CD8-positive, alpha-beta T cell (primary cell): ENCODE measurements at regions of chr7 and their contacts with region 1.

Region 1: DNA sequence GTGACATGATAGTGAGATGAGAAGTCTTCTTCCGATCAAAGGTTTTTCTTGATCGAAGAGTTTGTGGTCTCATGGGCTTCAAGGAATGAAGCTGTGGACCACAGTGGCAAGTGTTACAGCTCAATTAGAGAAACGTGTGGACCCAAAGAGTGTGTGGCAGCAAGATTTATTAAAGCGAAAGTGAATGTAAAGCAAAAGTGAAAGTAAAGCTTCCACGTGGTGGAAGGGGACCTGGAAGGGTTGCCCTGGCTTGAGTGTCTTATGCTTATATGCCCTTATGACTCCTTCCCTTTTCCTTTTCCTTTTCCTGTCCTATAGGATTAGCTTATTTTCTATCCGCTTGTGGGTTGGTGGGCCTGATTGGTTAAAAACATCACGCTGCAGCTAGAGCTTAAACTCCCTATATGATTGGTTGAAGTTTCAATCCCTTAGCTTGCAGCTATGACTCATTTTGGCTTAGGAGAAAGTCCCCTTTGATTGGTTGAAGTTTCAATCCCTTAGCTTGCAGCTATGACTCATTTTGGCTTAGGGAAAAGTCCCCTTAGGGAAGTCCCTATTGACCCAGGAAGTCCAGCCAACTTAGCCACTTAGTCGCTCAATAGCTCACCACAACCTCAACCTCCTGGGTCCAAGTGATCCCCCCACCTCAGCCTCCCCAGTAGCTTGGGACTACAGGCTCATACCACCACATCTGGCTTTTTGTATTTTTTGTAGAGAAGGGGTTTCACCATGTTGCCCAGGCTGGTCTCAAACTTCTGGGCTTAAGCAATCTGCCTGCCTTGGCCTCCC is 34.7 kb downstream of the MRPS24 start:
- DNase-seq: peak in 7 of 9 experiments; percentile 10 to 85 (median 38)
- ATAC-seq: peak; percentile 63
- H3K4me3 ChIP-seq: peak overlapping the region; percentile 49 to 53
- H3K4me3 Mint-ChIP-seq: peak overlapping the region; percentile 85
- H3K27ac ChIP-seq: peak overlapping the region; percentile 35 to 71
- H3K27ac Mint-ChIP-seq: peak overlapping the region; percentile 83
- H3K4me1 ChIP-seq: peaks cover 12% of the 10 kb centered on the region
- H3K4me1 Mint-ChIP-seq: peaks cover 18% of the 10 kb centered on the region
- H3K27me3 ChIP-seq: no peaks in the 10 kb centered on the region
- H3K27me3 Mint-ChIP-seq: no peaks in the 10 kb centered on the region
- CTCF ChIP-seq: no peak

Region 2: GRCh38 chr7:41940760-41941343 is 1893.8 kb before region 1 on chr7:
- CTCF ChIA-PET with region 1: interaction called, 24 read pairs
- POLR2A ChIA-PET with region 1: no interaction called
- intact Hi-C with region 1: loop called in 1 of 2 experiments (anchors 1 kb)
- DNase-seq: peak in 8 of 9 experiments; percentile 29 to 69 (median 46)
- ATAC-seq: peak; percentile 75
- H3K4me3 ChIP-seq: no peak overlapping the region
- H3K4me3 Mint-ChIP-seq: no peak overlapping the region
- H3K27ac ChIP-seq: no peak overlapping the region
- H3K27ac Mint-ChIP-seq: no peak overlapping the region
- H3K4me1 ChIP-seq: peaks cover 4% of the 10 kb centered on the region
- H3K4me1 Mint-ChIP-seq: peaks cover 10% of the 10 kb centered on the region
- H3K27me3 ChIP-seq: no peaks in the 10 kb centered on the region
- H3K27me3 Mint-ChIP-seq: peaks cover 23% of the 10 kb centered on the region
- CTCF ChIP-seq: peak; percentile 75

Region 3: DNA sequence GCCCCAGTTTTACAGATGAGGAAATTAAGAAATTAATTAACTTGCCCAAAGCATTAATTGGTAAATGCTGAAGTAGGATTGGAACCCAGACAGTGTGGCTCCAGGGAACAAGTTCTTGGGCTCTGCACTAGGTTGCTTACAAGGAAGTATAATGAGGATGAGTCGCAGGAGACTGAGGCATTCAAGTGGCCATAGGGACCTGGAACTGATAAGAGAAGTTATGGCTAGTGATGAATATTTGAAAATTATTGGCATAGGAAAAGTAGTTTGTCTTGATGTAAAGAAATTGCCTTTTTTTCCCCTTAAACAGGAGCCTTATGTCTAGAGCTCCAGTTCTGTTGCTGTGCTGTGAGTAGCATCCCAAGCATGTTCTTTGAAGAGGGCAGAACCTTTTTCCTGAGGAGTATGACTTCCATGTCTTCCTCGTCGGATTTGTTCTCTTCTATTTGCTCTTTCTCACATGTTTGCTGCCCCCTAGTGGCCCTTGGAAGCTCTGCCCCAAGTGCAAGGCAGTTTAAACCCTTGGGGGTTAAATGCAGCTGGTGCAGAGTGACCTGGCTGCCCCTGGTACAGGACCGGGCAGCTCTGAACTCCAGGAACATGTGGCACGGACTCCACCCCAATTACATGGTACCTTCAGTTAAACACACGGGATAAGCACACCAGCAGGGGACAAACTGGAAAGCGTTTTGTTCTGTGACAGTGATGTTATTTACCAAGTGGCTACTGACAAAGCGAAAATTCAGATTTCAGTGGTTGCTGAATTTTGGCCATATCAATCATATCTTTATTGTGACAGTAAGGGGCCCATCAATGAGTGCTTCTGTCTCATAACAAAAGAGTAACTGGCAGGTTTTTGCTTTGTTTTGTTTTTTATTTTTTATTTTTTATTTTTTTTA is 573.4 kb before region 1 on chr7:
- CTCF ChIA-PET with region 1: no interaction called
- POLR2A ChIA-PET with region 1: no interaction called
- intact Hi-C with region 1: loop called (anchors 1 to 5 kb)
- DNase-seq: peak in 8 of 9 experiments; percentile 35 to 71 (median 57)
- ATAC-seq: no peak
- H3K4me3 ChIP-seq: no peak overlapping the region
- H3K4me3 Mint-ChIP-seq: no peak overlapping the region
- H3K27ac ChIP-seq: no peak overlapping the region
- H3K27ac Mint-ChIP-seq: no peak overlapping the region
- H3K4me1 ChIP-seq: no peaks in the 10 kb centered on the region
- H3K4me1 Mint-ChIP-seq: no peaks in the 10 kb centered on the region
- H3K27me3 ChIP-seq: peaks cover 0 to 2% of the 10 kb centered on the region in 2 experiments
- H3K27me3 Mint-ChIP-seq: peaks cover 26% of the 10 kb centered on the region
- CTCF ChIP-seq: peak; percentile 83

Region 4: DNA sequence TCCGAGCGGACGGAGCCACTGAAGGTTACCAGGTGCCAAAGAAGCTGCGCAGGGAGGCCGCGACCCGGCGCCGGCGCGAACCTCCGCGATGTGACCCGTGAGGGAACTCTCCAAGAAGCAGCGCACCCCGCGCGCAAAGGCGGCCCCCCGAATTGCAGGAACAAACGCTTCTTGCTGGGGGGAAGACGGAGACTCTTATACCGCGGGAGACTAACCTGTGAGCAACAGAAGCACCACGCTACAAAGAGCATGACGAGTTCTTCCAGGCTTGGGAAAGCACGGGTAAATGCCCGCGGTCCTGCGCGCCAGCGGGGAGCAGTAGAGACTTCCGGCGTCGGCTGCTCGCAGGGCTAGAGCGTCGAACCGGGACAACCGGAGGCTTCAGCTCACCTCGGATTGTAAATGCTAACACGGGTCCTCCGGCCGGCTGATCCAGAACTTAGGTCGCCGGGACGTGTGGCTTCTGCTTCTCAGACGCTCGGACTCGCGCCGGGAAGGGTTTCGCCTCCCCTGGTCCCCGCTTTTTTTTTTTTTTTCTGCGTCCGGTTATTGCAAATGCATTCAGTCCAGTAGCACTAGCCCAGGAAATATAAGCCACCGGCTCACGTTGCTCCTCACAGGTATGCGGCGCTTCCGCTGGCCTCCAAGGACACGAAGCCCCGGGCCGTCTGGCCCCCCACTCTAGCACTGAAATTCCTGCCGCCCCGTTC is 105.3 kb before region 1 on chr7 and contains the start of gene COA1:
- CTCF ChIA-PET with region 1: interaction called, 5 read pairs
- POLR2A ChIA-PET with region 1: no interaction called
- intact Hi-C with region 1: loop called (anchors 1 to 2 kb)
- DNase-seq: peak; percentile 61 to 93 (median 81)
- ATAC-seq: peak; percentile 92
- H3K4me3 ChIP-seq: peak within 1 kb of the TSS; percentile 81 to 89
- H3K4me3 Mint-ChIP-seq: peak within 1 kb of the TSS; percentile 93
- H3K27ac ChIP-seq: peak within 1 kb of the TSS; percentile 70 to 74
- H3K27ac Mint-ChIP-seq: peak within 1 kb of the TSS; percentile 90
- H3K4me1 ChIP-seq: peaks cover 31% of the 10 kb centered on the region
- H3K4me1 Mint-ChIP-seq: peaks cover 42% of the 10 kb centered on the region
- H3K27me3 ChIP-seq: no peaks in the 10 kb centered on the region
- H3K27me3 Mint-ChIP-seq: no peaks in the 10 kb centered on the region
- CTCF ChIP-seq: no peak
- total RNA-seq, gene COA1: 95.8 to 96.7 TPM

Region 5: DNA sequence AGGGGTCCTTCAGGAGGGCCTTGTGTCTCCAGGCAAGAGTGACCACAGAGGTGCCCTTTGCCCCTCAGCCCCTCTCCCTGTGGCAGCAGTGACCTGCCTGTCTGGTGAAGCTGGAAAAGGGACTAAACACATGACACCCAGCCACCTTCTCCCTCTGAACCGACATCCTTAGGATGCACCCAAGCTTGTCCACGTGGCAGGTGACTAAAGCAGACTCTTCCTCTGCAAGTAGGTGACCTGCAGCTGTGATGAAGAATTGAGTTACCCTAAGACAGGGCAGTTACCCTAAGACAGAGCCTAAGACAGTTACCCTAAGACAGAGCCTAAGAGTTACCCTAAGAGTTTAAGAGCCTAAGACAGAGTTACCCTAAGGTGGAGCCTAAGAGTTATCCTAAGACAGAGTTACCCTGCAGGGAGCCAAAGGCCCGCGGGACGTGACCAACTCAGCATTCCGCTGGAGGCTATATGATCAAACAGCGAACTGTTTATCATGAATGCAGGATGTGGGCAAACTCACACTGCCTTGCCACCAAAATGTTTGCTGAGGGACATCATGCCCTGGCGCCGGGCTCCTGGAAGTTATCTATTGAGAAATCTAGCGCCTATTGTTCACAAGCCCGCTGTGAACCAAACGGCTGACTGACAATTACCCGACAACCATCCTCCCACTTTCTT is 26.4 kb before region 1 on chr7:
- CTCF ChIA-PET with region 1: no interaction called
- POLR2A ChIA-PET with region 1: no interaction called
- intact Hi-C with region 1: no loop called
- DNase-seq: peak in 6 of 9 experiments; percentile 1 to 63 (median 11)
- ATAC-seq: no peak
- H3K4me3 ChIP-seq: no peak overlapping the region
- H3K4me3 Mint-ChIP-seq: no peak overlapping the region
- H3K27ac ChIP-seq: peak overlapping the region in 1 of 2 experiments; percentile 40
- H3K27ac Mint-ChIP-seq: no peak overlapping the region
- H3K4me1 ChIP-seq: no peaks in the 10 kb centered on the region
- H3K4me1 Mint-ChIP-seq: peaks cover 2% of the 10 kb centered on the region
- H3K27me3 ChIP-seq: no peaks in the 10 kb centered on the region
- H3K27me3 Mint-ChIP-seq: peaks cover 13% of the 10 kb centered on the region
- CTCF ChIP-seq: no peak

Region 6: GRCh38 chr7:43856996-43857395 is 22.3 kb after region 1 on chr7:
- CTCF ChIA-PET with region 1: interaction called, 16 read pairs
- POLR2A ChIA-PET with region 1: no interaction called
- intact Hi-C with region 1: no loop called
- DNase-seq: no peak
- ATAC-seq: no peak
- H3K4me3 ChIP-seq: no peak overlapping the region
- H3K4me3 Mint-ChIP-seq: no peak overlapping the region
- H3K27ac ChIP-seq: no peak overlapping the region
- H3K27ac Mint-ChIP-seq: no peak overlapping the region
- H3K4me1 ChIP-seq: no peaks in the 10 kb centered on the region
- H3K4me1 Mint-ChIP-seq: no peaks in the 10 kb centered on the region
- H3K27me3 ChIP-seq: no peaks in the 10 kb centered on the region
- H3K27me3 Mint-ChIP-seq: peaks cover 4% of the 10 kb centered on the region
- CTCF ChIP-seq: no peak

Region 7: DNA sequence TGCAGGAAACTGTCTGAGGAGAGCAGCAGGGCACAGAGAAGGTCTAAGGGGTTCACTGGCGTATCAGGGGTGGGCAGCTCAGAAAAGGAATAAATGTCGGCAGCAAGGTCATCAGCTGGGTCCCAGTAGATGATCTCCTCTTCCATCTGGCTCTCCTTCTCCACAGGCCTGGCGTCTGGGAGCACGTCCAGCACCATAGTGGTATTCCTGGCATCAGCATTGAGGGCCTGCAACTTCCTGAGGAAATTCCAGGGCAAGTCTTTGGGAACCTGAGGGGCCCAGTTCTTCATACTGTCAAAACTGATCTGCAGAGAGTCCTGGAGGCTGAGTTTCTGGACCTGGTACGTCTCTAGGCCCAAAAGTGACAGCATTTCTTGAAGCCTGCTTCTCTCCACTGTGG is 44.2 kb after region 1 on chr7:
- CTCF ChIA-PET with region 1: no interaction called
- POLR2A ChIA-PET with region 1: no interaction called
- intact Hi-C with region 1: no loop called
- DNase-seq: no peak
- ATAC-seq: no peak
- H3K4me3 ChIP-seq: no peak overlapping the region
- H3K4me3 Mint-ChIP-seq: no peak overlapping the region
- H3K27ac ChIP-seq: no peak overlapping the region
- H3K27ac Mint-ChIP-seq: no peak overlapping the region
- H3K4me1 ChIP-seq: no peaks in the 10 kb centered on the region
- H3K4me1 Mint-ChIP-seq: no peaks in the 10 kb centered on the region
- H3K27me3 ChIP-seq: no peaks in the 10 kb centered on the region
- H3K27me3 Mint-ChIP-seq: no peaks in the 10 kb centered on the region
- CTCF ChIP-seq: no peak

Region 8: GRCh38 chr7:44398511-44398911 is 563.9 kb after region 1 on chr7:
- CTCF ChIA-PET with region 1: no interaction called
- POLR2A ChIA-PET with region 1: no interaction called
- intact Hi-C with region 1: no loop called
- DNase-seq: no peak
- ATAC-seq: no peak
- H3K4me3 ChIP-seq: no peak overlapping the region
- H3K4me3 Mint-ChIP-seq: no peak overlapping the region
- H3K27ac ChIP-seq: no peak overlapping the region
- H3K27ac Mint-ChIP-seq: no peak overlapping the region
- H3K4me1 ChIP-seq: no peaks in the 10 kb centered on the region
- H3K4me1 Mint-ChIP-seq: peaks cover 2% of the 10 kb centered on the region
- H3K27me3 ChIP-seq: no peaks in the 10 kb centered on the region
- H3K27me3 Mint-ChIP-seq: no peaks in the 10 kb centered on the region
- CTCF ChIP-seq: no peak

Region 9: GRCh38 chr7:44473295-44473694 is 638.6 kb after region 1 on chr7:
- CTCF ChIA-PET with region 1: no interaction called
- POLR2A ChIA-PET with region 1: no interaction called
- intact Hi-C with region 1: no loop called
- DNase-seq: no peak
- ATAC-seq: no peak
- H3K4me3 ChIP-seq: no peak overlapping the region
- H3K4me3 Mint-ChIP-seq: no peak overlapping the region
- H3K27ac ChIP-seq: no peak overlapping the region
- H3K27ac Mint-ChIP-seq: no peak overlapping the region
- H3K4me1 ChIP-seq: no peaks in the 10 kb centered on the region
- H3K4me1 Mint-ChIP-seq: peaks cover 68% of the 10 kb centered on the region
- H3K27me3 ChIP-seq: no peaks in the 10 kb centered on the region
- H3K27me3 Mint-ChIP-seq: no peaks in the 10 kb centered on the region
- CTCF ChIP-seq: no peak